Common myeloid progenitor, CD34-positive (primary cell): ENCODE measurements at regions of chr1 and their contacts with region 1.

Region 1: GRCh38 chr1:47262787-47263413 is 30.9 kb upstream of the TAL1 start:
- DNase-seq: peak; percentile 72 to 85 (median 80)
- H3K4me3 ChIP-seq: no peak overlapping the region
- H3K27ac ChIP-seq: no peak overlapping the region
- H3K4me1 ChIP-seq: peaks cover 0 to 2% (median 0%) of the 10 kb centered on the region in 4 experiments
- H3K27me3 ChIP-seq: no peaks in the 10 kb centered on the region

Region 2: DNA sequence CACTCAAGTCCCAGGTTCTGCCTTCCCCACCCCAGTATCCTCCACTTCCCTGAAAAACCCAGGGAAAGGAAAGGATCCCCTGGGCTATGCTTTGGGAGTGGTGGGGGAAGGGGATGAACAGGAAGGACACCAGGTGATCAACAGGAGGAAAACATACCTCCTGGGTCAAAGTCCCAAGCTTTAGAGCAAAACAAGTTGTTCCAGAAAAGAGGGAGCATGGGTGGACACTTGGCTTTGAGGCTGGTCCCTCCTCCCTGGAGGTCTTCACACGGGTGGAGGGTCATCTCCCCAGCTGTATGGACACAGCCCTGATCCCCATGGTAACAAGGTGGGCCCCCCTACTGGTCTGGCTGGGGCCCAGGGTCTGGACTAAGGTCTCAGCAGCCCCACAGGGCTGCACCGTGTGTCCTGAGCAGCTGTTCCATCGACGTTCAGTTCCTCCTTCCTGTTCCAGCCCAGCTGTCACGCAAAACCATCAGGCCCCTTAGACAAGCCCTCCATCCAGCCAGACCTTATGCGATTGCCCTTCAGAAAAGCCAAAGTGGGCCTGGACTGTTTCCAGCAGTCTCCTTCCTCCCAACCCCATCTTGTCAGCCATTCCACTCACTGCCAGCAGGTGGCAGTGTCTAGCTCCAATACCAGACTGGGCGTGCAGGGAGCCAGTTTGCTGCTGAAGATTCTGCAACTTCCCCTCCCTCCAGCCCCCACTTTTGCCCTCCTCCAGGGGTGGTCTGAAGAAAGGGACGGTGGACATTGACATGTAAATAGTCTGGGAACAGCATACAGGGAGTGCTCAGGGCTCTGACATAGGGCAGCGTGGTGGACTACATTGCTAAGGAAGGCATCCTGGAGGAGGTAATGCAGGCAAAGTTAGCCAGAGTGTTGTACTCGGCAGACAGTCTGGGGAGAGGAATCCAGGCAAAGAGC is 70.2 kb before region 1 on chr1:
- CTCF ChIA-PET with region 1: interaction called, 259 read pairs
- POLR2A ChIA-PET with region 1: interaction called, 8 read pairs
- DNase-seq: peak; percentile 82 to 90 (median 85)
- H3K4me3 ChIP-seq: peak overlapping the region in 1 of 7 experiments; percentile 37
- H3K27ac ChIP-seq: no peak overlapping the region
- H3K4me1 ChIP-seq: peaks cover 0 to 27% (median 21%) of the 10 kb centered on the region in 4 experiments
- H3K27me3 ChIP-seq: no peaks in the 10 kb centered on the region

Region 3: DNA sequence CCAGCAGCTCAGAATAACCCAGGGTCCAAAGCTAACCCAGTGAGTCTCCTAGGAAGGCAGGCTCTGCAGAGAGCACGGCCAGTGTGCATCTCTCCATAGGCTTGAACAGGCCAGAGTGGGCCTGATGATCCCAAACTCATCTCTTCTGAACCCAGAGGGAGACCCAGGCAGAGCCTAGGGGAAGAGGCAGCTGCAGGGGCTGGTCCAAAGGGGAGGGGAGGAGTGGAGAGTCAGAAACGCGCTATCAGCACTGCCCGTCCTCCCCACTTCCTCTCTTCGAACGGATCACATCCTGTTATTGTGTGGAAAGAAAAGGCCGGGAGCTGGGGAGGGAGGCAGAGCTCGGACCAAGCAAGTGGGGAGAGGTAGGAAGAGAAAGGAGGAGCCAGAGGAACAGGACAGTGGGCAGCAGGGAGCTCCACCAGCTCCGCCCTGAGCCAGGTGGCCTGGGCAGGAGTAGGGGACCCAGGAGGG is 51.1 kb before region 1 on chr1:
- CTCF ChIA-PET with region 1: interaction called, 25 read pairs
- POLR2A ChIA-PET with region 1: interaction called, 3 read pairs
- DNase-seq: peak; percentile 67 to 77 (median 73)
- H3K4me3 ChIP-seq: peak overlapping the region in 5 of 7 experiments; percentile 46 to 67 (median 57)
- H3K27ac ChIP-seq: peak overlapping the region; percentile 85 to 88
- H3K4me1 ChIP-seq: peaks cover 6 to 65% (median 54%) of the 10 kb centered on the region in 4 experiments
- H3K27me3 ChIP-seq: no peaks in the 10 kb centered on the region

Region 4: DNA sequence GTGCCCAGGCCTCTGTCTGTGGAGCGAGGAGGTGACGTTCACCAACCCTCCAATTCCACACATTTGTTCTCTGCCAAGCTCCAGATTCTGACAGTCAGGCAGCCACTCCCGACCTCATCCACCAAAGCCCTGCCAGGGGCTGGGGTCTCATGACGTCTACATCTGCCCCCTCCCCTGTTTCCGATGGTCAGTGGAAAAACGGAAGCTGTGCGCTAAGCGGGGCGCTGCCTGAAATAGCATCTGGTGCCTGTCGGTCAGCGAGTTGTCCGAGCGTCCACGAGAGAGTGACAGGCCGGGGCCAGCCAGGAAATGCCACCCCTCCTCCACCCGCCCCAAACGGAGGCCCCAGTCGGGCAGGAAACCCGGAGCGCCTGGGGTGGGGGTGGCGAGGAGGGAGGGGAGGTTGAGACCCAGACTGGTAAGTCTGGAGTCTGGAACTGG is 27.6 kb before region 1 on chr1:
- CTCF ChIA-PET with region 1: interaction called, 21 read pairs
- POLR2A ChIA-PET with region 1: interaction called, 5 read pairs
- DNase-seq: peak in 1 of 3 donors; percentile 57
- H3K4me3 ChIP-seq: peak overlapping the region in 4 of 7 experiments; percentile 11 to 60 (median 49)
- H3K27ac ChIP-seq: no peak overlapping the region
- H3K4me1 ChIP-seq: peaks cover 13 to 80% (median 67%) of the 10 kb centered on the region in 4 experiments
- H3K27me3 ChIP-seq: no peaks in the 10 kb centered on the region

Region 5: DNA sequence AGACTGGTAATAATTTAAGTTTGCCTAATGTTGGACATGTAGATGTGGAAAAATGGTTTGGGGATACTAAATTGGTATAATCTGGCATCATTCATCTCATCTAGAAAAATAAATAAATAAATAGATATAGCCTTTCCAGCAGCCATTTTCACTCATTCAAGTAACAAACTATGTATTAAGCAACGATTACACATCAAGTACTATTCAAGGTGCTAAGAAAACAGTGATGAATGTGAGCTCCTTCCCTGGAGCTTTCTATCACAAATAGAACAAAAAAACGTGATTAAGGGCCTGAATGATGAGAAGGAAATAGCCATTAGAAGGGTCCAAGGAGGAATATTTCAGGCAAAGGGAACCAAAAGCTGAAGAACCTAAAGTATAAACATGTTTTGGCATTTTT is 13.9 kb after region 1 on chr1:
- CTCF ChIA-PET with region 1: interaction called, 14 read pairs
- POLR2A ChIA-PET with region 1: no interaction called
- DNase-seq: no peak
- H3K4me3 ChIP-seq: no peak overlapping the region
- H3K27ac ChIP-seq: no peak overlapping the region
- H3K4me1 ChIP-seq: no peaks in the 10 kb centered on the region
- H3K27me3 ChIP-seq: no peaks in the 10 kb centered on the region